Mammary epithelial cell (primary cell): ENCODE measurements at regions of chr11 and their contacts with region 1.

Region 1: GRCh38 chr11:123841174-123841573 is 35.0 kb upstream of the OR6M1 start:
- DNase-seq: no peak
- H3K4me3 ChIP-seq: no peak overlapping the region
- H3K27ac ChIP-seq: no peak overlapping the region
- H3K4me1 ChIP-seq: peaks cover 4% of the 10 kb centered on the region
- H3K27me3 ChIP-seq: no peaks in the 10 kb centered on the region
- CTCF ChIP-seq: no peak

Region 2: GRCh38 chr11:123939317-123939716 is 98.1 kb after region 1 on chr11 and contains the start of gene OR4D5:
- CTCF ChIA-PET with region 1: no interaction called
- dilution Hi-C with region 1: loop called (anchors 5 kb)
- in situ Hi-C with region 1: no loop called
- intact Hi-C with region 1: no loop called
- DNase-seq: no peak
- H3K4me3 ChIP-seq: no peak within 1 kb of the TSS
- H3K27ac ChIP-seq: no peak within 1 kb of the TSS
- H3K4me1 ChIP-seq: no peaks in the 10 kb centered on the region
- H3K27me3 ChIP-seq: no peaks in the 10 kb centered on the region
- CTCF ChIP-seq: no peak
- total RNA-seq, gene OR4D5: 0.17 TPM in 1 of 2 donors, not detected in the other